GM18951 (cell line): ENCODE measurements at regions of chr2 and their contacts with region 1.

Region 1: DNA sequence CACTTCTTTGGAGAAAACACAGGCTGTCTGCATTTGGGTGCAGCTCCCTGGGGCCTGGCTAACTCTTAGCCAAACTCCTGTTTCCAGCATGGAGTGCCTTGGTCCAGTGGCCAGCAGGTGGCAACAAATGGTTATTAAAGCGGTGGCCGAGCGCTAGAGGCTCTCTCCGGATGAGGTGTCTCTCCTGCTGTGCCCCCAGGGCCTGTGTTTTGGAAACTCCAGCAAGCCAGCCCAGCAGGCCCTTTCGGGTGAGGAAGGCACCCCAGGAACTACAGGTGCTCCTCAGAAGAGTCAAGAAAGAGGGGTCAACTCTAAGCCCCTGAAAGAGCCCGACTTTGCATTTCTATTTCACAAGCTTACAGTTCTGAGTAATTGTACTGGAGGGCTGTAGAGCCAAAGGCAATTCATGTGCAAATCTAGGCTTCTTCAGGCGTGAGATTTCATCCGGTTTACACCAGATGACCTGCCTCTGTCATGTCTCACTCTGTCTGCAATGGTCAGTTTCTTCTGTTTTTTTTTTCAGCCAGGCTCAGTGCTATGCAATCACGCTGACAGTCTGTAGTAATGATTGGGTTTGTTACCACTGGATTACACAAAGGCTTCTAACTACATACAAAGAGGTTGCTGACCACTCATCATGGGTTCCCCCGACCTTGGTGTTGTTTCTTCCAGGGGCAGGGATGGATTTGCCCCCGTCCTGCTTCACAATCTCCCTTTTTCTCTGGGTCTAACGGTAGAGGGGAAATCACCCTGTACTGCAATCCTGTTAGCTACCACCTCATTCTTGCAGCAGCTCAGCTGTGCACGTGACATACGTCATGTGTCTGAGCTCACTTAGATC is 7.6 kb upstream of the CHRNA1 start:
- POLR2A ChIP-seq: no peak

Region 2: DNA sequence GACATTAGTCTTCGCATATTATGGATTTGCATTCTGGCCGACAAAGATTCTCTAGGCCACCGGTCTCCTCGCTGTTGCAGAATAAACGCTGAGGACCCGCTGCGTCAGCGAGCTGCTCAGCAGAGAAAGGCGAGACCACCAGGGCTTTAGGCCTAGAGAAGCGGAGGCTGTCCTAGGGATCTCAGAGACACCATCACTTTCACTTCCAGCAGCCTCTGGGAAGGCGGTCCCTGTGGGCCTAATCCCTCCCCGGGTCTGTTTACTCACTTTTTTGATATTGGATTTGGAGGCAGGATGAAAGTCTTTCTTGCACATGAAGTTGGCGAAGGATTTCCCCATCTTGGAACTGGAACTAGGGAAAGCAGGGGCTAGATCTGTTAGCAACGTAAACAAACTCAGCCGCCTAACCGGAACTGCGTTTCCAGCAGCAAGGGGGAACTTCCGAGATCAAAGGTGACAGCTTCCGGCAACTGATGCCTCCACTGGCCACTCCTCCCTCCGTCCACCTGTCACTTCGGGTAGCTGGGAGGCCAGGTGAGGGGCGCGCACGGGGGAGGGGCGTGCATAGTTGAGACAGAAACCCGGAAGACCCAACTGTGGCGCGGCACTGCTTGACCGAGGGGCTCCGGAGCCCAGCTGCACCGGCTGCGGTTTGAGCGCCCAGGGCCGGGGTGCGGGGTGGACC is 376.4 kb before region 1 on chr2 and contains the start of gene SCRN3:
- in situ Hi-C with region 1: no loop called
- POLR2A ChIP-seq: peak; percentile 74

Region 3: GRCh38 chr2:174985630-174986029 is 213.8 kb after region 1 on chr2:
- in situ Hi-C with region 1: loop called (anchors 25 kb)
- POLR2A ChIP-seq: no peak